Esophagus squamous epithelium (tissue), 5 donors: ENCODE measurements at regions of chr17 and their contacts with region 1.

Region 1: GRCh38 chr17:31433091-31433790 is 41.8 kb downstream of the RAB11FIP4 start:
- DNase-seq: no peak
- H3K4me3 ChIP-seq: no peak overlapping the region
- H3K27ac ChIP-seq: no peak overlapping the region
- H3K4me1 ChIP-seq: peaks cover 0 to 5% (median 0%) of the 10 kb centered on the region in 3 donors
- H3K27me3 ChIP-seq: peaks cover 0 to 46% (median 0%) of the 10 kb centered on the region in 4 donors
- CTCF ChIP-seq: no peak
- POLR2A ChIP-seq: no peak

Region 2: GRCh38 chr17:31171701-31172100 is 261.5 kb before region 1 on chr17:
- intact Hi-C with region 1: no loop called
- DNase-seq: no peak
- H3K4me3 ChIP-seq: no peak overlapping the region
- H3K27ac ChIP-seq: no peak overlapping the region
- H3K4me1 ChIP-seq: no peaks in the 10 kb centered on the region
- H3K27me3 ChIP-seq: no peaks in the 10 kb centered on the region
- CTCF ChIP-seq: no peak
- POLR2A ChIP-seq: no peak

Region 3: DNA sequence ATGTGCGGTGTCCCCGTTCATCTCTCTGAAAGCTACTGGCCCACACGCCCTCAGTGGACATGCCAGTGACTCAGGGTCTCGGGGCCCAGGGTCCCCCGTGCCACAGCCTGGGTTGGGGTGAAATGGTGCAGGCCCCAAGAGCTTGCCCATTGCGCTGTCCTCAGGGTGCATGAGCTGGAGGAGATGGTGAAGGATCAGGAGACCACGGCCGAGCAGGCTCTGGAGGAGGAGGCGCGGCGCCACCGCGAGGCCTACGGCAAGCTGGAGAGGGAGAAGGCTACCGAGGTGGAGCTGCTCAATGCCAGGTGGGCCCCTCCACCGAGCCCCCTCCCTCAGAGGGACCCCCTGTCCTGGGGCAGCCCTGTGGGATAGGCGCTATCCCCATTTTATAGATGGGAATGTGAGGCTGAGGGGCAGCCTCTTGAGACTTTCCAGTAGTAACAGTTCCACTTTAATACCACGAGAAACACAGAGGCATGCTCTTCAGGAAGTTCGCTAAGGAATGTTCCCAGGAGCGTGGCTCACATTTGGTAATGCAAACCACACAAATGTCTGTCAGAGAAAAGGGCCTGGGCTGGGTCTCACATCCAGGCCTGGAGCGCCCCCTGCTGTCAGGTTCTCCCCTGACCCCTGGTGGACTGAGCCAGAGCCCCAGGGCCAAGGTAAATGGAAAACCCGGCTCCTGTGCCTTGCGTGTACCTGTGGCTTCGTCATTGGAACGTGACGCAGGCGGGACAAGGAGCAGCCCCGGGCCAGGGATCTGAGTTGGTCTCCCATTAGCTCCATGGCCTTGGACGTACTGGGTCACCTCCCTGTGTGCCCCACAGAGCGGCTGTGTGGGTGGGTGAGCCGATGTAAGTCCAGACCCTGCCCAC is 91.9 kb after region 1 on chr17:
- intact Hi-C with region 1: loop called (anchors 5 kb)
- DNase-seq: peak; percentile 26
- H3K4me3 ChIP-seq: no peak overlapping the region
- H3K27ac ChIP-seq: no peak overlapping the region
- H3K4me1 ChIP-seq: peaks cover 0 to 5% (median 4%) of the 10 kb centered on the region in 3 donors
- H3K27me3 ChIP-seq: no peaks in the 10 kb centered on the region
- CTCF ChIP-seq: peak; percentile 87 to 95 (median 94)
- POLR2A ChIP-seq: no peak